ENCODE measurements at regions of chr2 and their contacts with region 1.

Region 1: DNA sequence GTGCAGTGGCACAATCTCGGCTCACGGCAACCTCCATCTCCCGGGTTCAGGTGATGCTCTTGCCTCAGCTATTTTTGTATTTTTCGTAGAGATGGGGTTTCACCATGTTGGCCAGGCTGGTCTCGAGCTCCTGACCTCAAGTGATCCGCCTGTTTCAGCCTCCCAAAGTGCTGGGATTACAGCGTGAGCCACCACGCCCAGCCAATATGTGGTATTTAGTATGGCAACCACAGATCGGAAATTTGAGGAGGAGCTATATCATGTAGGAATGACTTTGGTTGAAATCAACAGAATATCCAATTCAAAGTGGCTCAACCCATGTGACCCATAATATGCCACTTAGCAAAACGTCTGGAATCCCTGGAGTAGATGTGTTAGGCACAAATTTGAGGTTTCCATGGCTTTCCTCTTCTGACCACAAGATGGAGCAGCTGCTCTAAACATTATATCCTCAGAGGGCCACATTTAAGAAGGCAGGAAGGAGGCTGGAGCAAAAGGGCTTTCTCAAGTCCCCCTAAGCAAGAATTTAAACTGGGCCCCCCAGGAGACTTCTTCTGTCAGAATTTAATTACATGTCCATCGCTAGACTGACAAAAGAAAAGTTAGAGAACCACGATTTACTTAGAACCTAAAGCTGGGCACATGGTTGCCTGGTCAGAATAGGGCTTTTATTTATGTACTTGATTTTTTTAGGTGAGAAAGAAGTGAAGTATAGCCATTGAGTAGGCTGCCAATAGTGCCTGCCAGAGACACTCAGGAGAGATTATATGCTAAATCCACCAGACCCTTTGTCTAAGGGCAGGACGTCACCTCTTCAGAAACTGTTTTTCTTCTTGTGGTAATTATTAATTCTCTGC is 49.6 kb upstream of the ITSN2 start:
- DNase-seq: no peak
- ATAC-seq: peak; percentile 93

Region 2: GRCh38 chr2:24123195-24123921 is 286.6 kb before region 1 on chr2 and contains the starts of genes FAM228B and PFN4:
- intact Hi-C with region 1: no loop called
- DNase-seq: peak; percentile 88
- ATAC-seq: peak; percentile 88
- total RNA-seq, gene FAM228B: 61.4 TPM
- total RNA-seq, gene PFN4: 1.5 TPM

Region 3: DNA sequence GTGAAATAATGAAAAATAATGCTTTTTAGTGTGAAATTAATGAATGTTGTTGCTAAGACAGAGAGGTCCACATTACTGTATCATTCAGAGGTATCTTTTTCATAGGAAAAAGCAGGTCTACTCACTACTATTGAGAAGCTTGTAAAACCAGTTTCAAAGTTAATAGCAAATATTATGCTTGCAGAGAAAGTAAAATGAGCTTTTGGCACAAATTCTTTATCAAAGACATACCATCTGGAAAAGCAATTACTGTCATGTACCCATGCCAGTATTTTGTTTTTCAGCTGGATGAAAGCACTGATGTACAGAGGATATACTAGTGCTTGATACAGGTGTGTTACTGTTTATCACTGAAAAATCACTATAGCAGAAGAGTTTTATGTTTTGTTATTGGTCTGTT is 158.6 kb after region 1 on chr2:
- intact Hi-C with region 1: no loop called
- DNase-seq: no peak
- ATAC-seq: no peak

Region 4: DNA sequence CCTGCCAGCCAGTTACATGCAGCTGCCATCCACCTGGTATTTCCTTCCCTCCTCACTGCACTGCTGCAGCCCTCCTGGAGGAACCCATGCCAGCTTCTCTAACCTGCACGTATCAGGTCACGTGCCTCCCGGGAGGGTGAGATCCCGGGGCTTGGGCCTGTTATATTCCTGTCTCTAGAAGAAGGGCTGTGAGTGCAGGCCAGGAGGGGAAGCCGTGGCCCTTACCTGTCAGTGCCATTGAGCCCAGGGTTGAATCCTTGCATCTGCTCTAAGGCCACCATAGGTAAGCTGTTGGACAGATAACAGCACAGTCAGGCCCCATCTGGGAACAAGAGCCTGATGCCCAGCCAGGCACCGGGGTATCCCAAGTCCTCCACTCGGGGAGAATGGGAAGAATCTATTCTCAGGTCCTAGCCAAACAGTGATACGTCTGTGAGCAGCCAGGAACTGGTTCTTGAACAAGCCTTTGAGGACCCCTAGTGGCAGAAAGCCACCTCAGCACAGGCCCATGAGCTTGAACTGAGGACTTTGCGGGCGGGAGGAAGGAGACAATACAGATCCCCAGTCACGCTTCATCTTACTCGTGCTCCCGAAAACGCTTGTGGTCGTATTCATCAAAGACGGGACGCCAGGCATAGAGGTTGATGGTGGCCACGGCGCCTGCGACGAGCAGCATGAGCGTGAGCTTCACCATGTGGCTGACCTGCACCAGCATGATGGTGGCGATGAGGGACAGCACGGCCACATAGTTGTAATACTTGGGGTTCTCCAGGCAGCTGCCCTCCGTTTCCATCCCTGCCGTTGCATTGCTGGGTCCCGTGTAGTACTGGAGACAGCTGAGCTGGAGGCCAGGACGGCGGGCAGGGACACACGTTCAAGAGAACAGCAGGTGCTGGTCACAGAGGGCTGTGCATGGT is 417.7 kb after region 1 on chr2:
- intact Hi-C with region 1: loop called (anchors 5 kb)
- DNase-seq: peak; percentile 90
- ATAC-seq: peak; percentile 92

Measured in sciatic nerve (tissue), 2 donors.